Breast epithelium (tissue), 4 donors: ENCODE measurements at regions of chr10 and their contacts with region 1.

Region 1: GRCh38 chr10:29386342-29386999 is 97.6 kb downstream of the LYZL1 start:
- DNase-seq: no peak
- H3K4me3 ChIP-seq: no peak overlapping the region
- H3K27ac ChIP-seq: no peak overlapping the region
- H3K4me1 ChIP-seq: no peaks in the 10 kb centered on the region
- H3K27me3 ChIP-seq: no peaks in the 10 kb centered on the region
- CTCF ChIP-seq: peak; percentile 63 to 75 (median 71)
- POLR2A ChIP-seq: no peak

Region 2: GRCh38 chr10:29451946-29452345 is 65.5 kb after region 1 on chr10:
- intact Hi-C with region 1: loop called (anchors 2 kb)
- DNase-seq: no peak
- H3K4me3 ChIP-seq: no peak overlapping the region
- H3K27ac ChIP-seq: no peak overlapping the region
- H3K4me1 ChIP-seq: no peaks in the 10 kb centered on the region
- H3K27me3 ChIP-seq: no peaks in the 10 kb centered on the region
- CTCF ChIP-seq: no peak
- POLR2A ChIP-seq: no peak

Region 3: DNA sequence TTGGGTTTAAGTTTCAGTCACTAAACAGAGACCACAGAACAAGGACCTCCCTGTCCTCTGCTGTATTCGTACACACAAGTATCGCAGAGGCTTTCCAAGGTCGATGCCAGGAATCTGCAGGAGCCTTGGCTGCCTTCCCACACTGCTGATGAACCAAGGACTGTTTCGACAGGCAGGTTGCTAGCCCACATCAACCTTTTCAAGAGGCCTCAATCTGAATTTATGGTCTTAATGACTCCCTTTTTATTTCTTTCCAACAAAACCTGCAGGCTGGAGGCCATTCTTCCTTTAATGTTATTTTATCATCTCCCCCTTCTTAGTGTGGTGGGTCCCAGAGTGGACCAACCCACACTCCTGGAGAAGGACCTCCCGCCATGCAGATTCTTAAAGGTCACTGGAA is 627.3 kb after region 1 on chr10:
- intact Hi-C with region 1: no loop called
- DNase-seq: peak in 1 of 2 donors; percentile 39
- H3K4me3 ChIP-seq: no peak overlapping the region
- H3K27ac ChIP-seq: no peak overlapping the region
- H3K4me1 ChIP-seq: no peaks in the 10 kb centered on the region
- H3K27me3 ChIP-seq: no peaks in the 10 kb centered on the region
- CTCF ChIP-seq: no peak
- POLR2A ChIP-seq: no peak